CD8-positive, alpha-beta T cell (primary cell): ENCODE measurements at regions of chr3 and their contacts with region 1.

Region 1: DNA sequence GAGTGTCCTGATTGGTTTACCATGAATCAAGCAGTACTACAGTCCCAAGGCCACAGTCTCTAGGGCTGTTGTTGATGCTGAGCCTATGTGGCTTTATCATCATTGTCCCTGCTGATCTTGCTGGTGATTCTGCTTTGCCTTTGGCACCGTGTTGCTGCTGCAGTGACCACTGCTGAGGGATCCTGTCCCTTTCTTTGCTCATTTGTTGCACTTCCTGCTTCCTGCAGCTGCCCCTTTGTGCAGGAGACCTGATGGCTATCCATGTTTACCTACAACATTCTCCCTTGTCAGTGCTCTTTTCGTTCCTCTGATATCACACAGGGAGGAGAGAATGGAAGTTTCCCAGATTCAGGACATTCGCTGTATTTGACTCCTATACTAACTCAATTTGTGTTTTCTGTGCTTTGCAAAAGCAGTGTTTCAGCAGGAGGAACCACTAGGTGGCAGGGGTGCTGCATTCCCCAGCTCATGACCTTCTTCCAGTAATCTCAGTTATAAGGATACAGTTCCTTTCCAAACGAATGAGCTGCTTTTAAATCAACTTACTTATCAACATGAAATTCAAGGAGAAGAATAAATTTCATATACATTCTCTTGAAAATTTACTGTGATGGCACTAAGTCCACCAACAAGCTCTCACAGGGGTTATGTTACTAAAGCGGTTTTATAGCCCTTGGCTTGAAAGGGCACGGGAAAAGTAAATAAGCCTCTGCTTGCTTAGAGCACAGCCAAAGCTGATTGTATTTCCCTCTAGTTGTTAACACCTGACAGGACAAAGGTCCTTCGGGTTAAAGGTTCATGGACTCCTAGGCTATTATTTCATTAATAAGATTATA is 9.7 kb upstream of the THUMPD3 start:
- DNase-seq: peak; percentile 22 to 77 (median 63)
- ATAC-seq: peak; percentile 88
- H3K4me3 ChIP-seq: no peak overlapping the region
- H3K4me3 Mint-ChIP-seq: no peak overlapping the region
- H3K27ac ChIP-seq: no peak overlapping the region
- H3K27ac Mint-ChIP-seq: no peak overlapping the region
- H3K4me1 ChIP-seq: no peaks in the 10 kb centered on the region
- H3K4me1 Mint-ChIP-seq: peaks cover 4% of the 10 kb centered on the region
- H3K27me3 ChIP-seq: no peaks in the 10 kb centered on the region
- H3K27me3 Mint-ChIP-seq: no peaks in the 10 kb centered on the region
- CTCF ChIP-seq: peak; percentile 98

Region 2: DNA sequence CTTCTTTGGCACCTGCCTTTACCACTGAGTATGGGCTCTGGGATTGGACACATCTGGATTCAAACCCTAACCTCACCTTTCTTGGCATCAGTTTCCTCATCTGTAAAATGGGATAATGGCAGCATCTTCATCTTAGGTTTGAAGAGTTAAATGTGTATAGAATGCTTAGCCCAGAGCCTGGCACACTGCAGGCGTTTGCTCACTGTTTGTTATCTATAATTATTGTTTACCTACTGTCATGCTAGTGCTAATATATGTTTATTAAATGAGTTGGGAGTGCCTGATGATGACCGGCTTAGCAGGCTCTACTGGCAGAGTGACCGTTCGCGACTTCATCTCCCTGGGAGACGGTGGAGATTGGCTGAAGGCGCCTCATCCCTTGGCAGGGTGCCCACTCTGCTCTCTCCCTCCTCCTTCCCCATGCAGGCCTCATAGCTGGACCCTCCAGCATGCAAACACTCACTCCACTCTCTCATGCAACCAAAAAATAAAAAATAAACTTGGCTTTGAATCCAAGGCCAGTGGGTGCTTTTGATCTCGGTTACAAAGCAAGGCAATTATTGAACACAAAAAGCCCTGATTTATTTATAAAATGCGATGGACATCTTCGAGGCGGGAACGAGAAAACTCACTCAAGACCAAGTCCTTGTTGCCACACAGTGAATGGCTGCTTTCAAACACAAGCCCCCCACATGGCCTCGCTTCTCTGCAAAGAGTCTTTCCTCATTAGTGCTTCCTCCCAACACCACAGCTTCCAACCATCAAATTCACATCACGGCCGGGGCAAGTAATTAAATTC is 254.4 kb before region 1 on chr3:
- CTCF ChIA-PET with region 1: no interaction called
- POLR2A ChIA-PET with region 1: no interaction called
- intact Hi-C with region 1: no loop called
- DNase-seq: no peak
- ATAC-seq: no peak
- H3K4me3 ChIP-seq: no peak overlapping the region
- H3K4me3 Mint-ChIP-seq: no peak overlapping the region
- H3K27ac ChIP-seq: no peak overlapping the region
- H3K27ac Mint-ChIP-seq: no peak overlapping the region
- H3K4me1 ChIP-seq: no peaks in the 10 kb centered on the region
- H3K4me1 Mint-ChIP-seq: no peaks in the 10 kb centered on the region
- H3K27me3 ChIP-seq: no peaks in the 10 kb centered on the region
- H3K27me3 Mint-ChIP-seq: no peaks in the 10 kb centered on the region
- CTCF ChIP-seq: no peak

Region 3: GRCh38 chr3:9384141-9384853 is 31.2 kb after region 1 on chr3:
- CTCF ChIA-PET with region 1: interaction called, 14 read pairs
- POLR2A ChIA-PET with region 1: no interaction called
- intact Hi-C with region 1: no loop called
- DNase-seq: no peak
- ATAC-seq: no peak
- H3K4me3 ChIP-seq: no peak overlapping the region
- H3K4me3 Mint-ChIP-seq: no peak overlapping the region
- H3K27ac ChIP-seq: no peak overlapping the region
- H3K27ac Mint-ChIP-seq: peak overlapping the region; percentile 37
- H3K4me1 ChIP-seq: peaks cover 4% of the 10 kb centered on the region
- H3K4me1 Mint-ChIP-seq: peaks cover 34% of the 10 kb centered on the region
- H3K27me3 ChIP-seq: no peaks in the 10 kb centered on the region
- H3K27me3 Mint-ChIP-seq: no peaks in the 10 kb centered on the region
- CTCF ChIP-seq: no peak

Region 4: GRCh38 chr3:9422712-9423424 is 69.7 kb after region 1 on chr3:
- CTCF ChIA-PET with region 1: interaction called, 26 read pairs
- POLR2A ChIA-PET with region 1: no interaction called
- intact Hi-C with region 1: loop called (anchors 1 kb)
- DNase-seq: peak in 2 of 9 experiments; percentile 53 to 67
- ATAC-seq: peak; percentile 93
- H3K4me3 ChIP-seq: no peak overlapping the region
- H3K4me3 Mint-ChIP-seq: no peak overlapping the region
- H3K27ac ChIP-seq: peak overlapping the region in 1 of 2 experiments; percentile 38
- H3K27ac Mint-ChIP-seq: peak overlapping the region; percentile 86
- H3K4me1 ChIP-seq: peaks cover 6% of the 10 kb centered on the region
- H3K4me1 Mint-ChIP-seq: peaks cover 54% of the 10 kb centered on the region
- H3K27me3 ChIP-seq: no peaks in the 10 kb centered on the region
- H3K27me3 Mint-ChIP-seq: no peaks in the 10 kb centered on the region
- CTCF ChIP-seq: peak; percentile 73

Region 5: DNA sequence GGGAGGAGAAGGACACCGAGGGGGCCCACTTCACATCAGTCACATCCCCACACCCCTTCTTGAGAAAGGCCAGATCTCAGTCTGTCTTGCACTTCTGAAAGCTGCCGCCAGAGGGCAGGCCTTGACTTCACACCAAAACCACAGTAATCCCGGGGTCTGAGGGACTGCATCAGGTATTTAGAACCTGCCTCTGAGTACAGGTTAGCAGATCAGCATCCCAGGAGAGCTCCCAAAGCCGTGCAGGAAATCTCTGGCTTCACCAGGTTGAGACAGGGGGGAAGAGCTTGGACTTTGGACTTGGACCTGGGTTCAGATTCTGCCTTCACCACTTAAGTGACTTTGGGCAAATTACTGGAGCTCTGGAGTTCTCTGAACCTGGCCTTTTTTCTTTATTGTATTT is 150.1 kb after region 1 on chr3:
- CTCF ChIA-PET with region 1: interaction called, 6 read pairs
- POLR2A ChIA-PET with region 1: no interaction called
- intact Hi-C with region 1: loop called in 1 of 2 experiments (anchors 1 kb)
- DNase-seq: peak; percentile 45 to 79 (median 67)
- ATAC-seq: peak; percentile 68
- H3K4me3 ChIP-seq: no peak overlapping the region
- H3K4me3 Mint-ChIP-seq: no peak overlapping the region
- H3K27ac ChIP-seq: no peak overlapping the region
- H3K27ac Mint-ChIP-seq: no peak overlapping the region
- H3K4me1 ChIP-seq: peaks cover 14% of the 10 kb centered on the region
- H3K4me1 Mint-ChIP-seq: peaks cover 8% of the 10 kb centered on the region
- H3K27me3 ChIP-seq: peaks cover 17% of the 10 kb centered on the region in 2 experiments
- H3K27me3 Mint-ChIP-seq: peaks cover 37% of the 10 kb centered on the region
- CTCF ChIP-seq: peak; percentile 69

Region 6: GRCh38 chr3:10115326-10116137 is 762.4 kb after region 1 on chr3 and contains the start of gene BRK1:
- CTCF ChIA-PET with region 1: no interaction called
- POLR2A ChIA-PET with region 1: no interaction called
- intact Hi-C with region 1: no loop called
- DNase-seq: peak; percentile 83 to 98 (median 93)
- ATAC-seq: peak; percentile 98
- H3K4me3 ChIP-seq: peak within 1 kb of the TSS; percentile 87 to 95
- H3K4me3 Mint-ChIP-seq: peak within 1 kb of the TSS; percentile 99
- H3K27ac ChIP-seq: peak within 1 kb of the TSS; percentile 81 to 87
- H3K27ac Mint-ChIP-seq: peak within 1 kb of the TSS; percentile 99
- H3K4me1 ChIP-seq: peaks cover 27% of the 10 kb centered on the region
- H3K4me1 Mint-ChIP-seq: peaks cover 43% of the 10 kb centered on the region
- H3K27me3 ChIP-seq: no peaks in the 10 kb centered on the region
- H3K27me3 Mint-ChIP-seq: peaks cover under 1% of the 10 kb centered on the region
- CTCF ChIP-seq: no peak
- total RNA-seq, gene BRK1: 31.5 to 36.3 TPM